ENCODE measurements at regions of chr7 and their contacts with region 1.

Region 1: DNA sequence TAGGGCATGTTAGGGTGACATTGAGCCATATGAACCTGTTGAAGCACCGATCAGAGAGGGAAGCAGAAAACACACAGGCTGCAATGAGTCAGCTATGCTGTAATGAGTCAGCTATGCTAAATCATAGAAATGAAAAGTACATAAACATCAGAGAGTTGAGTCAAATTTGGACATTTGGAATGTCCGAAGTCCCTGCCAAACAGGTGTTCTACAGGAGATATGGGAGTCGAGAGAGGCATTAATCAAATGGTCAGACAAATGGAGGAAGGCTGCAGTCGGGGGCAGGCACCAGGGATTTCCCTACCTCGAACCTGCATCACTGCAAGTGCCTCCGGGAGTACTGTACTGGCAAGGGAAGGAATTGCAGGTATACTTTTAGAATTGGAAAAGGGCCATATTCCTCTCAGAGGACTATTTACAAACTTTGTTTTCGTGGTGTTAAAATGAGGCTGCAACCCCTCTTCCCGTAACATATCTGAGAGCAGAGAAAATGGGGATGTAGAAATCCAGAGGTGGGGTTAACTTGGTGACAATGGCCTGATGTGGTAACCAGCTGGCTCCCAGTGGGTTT is 8.8 kb upstream of the ZC3HAV1 start:
- DNase-seq: peak; percentile 76
- H3K4me3 Mint-ChIP-seq: peak overlapping the region; percentile 46
- H3K27ac Mint-ChIP-seq: peak overlapping the region; percentile 17
- H3K4me1 Mint-ChIP-seq: peaks cover 52% of the 10 kb centered on the region
- H3K27me3 Mint-ChIP-seq: no peaks in the 10 kb centered on the region

Region 2: GRCh38 chr7:139038691-139039090 is 79.6 kb before region 1 on chr7:
- CTCF ChIA-PET with region 1: no interaction called
- intact Hi-C with region 1: no loop called
- DNase-seq: no peak
- H3K4me3 Mint-ChIP-seq: no peak overlapping the region
- H3K27ac Mint-ChIP-seq: no peak overlapping the region
- H3K4me1 Mint-ChIP-seq: peaks cover 19% of the 10 kb centered on the region
- H3K27me3 Mint-ChIP-seq: no peaks in the 10 kb centered on the region

Region 3: DNA sequence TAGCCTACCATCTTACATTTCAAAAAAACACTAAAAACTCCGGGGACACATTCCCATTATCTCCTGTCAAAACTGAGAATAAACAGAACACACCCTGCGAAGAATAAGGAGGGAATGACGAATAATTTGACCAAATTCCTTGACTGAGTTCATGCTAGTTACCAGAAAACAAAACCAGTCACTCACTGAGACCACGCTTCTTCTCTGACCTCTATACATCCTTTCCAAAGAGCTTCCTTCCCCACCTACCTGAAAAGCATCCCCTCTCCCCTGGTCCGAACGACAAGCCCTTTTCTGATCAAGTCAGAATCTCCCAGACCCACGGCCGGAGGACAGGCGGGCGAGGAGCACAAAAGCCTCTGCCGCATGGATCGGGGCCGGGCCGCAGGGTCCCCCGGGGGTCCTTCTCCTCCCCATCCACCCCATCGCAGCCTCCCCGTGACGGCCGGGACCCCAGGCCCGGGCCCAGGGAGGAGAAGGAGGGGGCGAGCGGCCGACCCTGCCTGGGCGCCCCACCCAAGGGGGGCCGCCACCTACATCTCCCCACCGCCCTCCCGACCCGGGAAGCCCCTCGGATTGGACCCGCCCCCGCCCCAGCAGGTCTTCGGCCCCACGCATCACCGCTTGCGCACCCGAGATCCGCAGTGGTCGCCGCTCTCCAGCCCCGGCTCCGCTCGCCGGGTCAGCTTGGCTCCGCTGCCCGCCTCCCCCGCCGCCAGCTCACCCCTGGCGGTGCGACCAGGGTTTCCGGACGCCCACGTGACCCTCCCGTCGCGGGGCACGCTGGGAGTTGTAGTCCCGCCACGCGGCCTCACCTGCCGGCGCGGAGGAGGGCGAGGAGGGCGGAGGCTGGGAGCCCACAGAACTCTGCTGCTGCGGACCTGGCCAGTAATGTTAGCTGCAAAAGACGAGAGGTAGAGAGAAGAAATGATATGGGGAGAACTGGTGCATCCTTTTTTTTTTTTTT is 1279.7 kb after region 1 on chr7 and contains the start of gene SLC37A3:
- CTCF ChIA-PET with region 1: no interaction called
- intact Hi-C with region 1: loop called (anchors 5 kb)
- DNase-seq: peak; percentile 90
- H3K4me3 Mint-ChIP-seq: peak within 1 kb of the TSS; percentile 81
- H3K27ac Mint-ChIP-seq: peak within 1 kb of the TSS; percentile 69
- H3K4me1 Mint-ChIP-seq: peaks cover 26% of the 10 kb centered on the region
- H3K27me3 Mint-ChIP-seq: no peaks in the 10 kb centered on the region
- total RNA-seq, gene SLC37A3: 25.6 to 28.7 TPM